Activated B cell treated with CpG ODN at 0.5 μM for 24 hours (primary cell): ENCODE measurements at regions of chr7 and their contacts with region 1.

Region 1: DNA sequence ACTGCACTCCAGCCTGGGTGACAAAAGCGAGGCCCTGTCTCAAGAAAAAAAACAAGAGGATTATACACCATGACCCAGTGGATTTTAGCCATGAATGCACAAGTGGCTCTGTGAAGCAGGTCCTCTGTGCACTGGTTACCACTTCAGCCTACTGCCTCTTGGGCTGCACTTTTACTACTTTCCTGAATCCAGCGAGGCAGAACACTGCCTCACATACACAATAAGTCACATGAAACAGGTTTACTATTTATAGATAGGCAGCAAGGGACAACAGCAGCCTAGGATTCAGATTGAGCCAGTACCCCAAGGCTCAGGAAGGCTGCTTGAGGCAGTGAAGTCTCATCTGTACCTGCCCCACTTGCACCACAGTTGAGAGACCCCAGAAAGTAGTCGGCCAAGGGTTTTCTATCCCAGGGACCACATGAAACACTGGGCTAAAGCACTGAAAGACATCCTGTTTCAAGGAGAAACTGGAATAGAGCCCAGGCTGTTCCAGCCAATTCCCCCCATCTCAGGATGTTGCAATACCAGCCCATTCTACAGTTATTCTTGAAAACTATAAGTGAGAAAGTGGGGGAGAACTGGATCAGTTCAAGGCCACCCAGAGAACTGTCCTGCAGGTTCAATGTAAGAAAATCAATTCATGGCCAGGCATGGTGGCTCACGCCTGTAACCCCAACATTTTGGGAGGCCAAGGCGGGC is 10.3 kb upstream of the OGDH start:
- DNase-seq: no peak
- ATAC-seq: no peak
- H3K4me3 Mint-ChIP-seq: no peak overlapping the region
- H3K27ac Mint-ChIP-seq: no peak overlapping the region
- H3K4me1 Mint-ChIP-seq: no peaks in the 10 kb centered on the region
- H3K27me3 Mint-ChIP-seq: peaks cover 5% of the 10 kb centered on the region
- CTCF ChIP-seq: no peak

Region 2: DNA sequence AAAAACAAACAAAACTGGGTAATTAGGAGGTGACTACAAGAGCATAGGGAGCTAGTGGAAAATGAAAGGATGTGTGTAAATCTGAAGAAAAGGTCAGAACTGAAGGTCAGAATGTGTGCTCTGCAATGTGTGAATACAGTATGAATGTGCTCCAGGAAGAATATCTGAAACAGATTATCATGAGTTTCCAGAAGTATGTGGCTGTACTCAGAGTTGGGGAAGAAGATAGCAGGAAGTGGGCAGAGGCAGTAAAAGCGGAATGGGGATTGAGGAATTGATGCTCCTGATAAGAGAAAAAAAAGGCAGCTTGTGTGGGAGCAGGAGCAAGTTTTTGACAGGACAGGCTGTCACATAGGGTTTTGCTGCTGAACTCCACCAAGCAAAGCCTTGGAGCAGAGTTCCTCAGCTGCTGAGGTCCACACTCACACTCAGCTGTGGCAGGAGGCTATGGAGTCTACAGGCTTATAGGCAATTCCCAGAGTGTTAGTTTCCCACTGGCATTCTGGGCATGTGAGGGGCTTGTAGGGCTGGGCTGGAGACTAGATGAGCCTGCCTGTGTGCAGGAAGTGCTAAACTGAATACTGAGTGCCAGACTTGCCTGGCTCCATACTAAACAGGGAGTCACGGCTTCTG is 228.9 kb after region 1 on chr7:
- CTCF ChIA-PET with region 1: no interaction called
- POLR2A ChIA-PET with region 1: interaction called, 10 read pairs
- intact Hi-C with region 1: no loop called
- DNase-seq: no peak
- ATAC-seq: no peak
- H3K4me3 Mint-ChIP-seq: no peak overlapping the region
- H3K27ac Mint-ChIP-seq: no peak overlapping the region
- H3K4me1 Mint-ChIP-seq: no peaks in the 10 kb centered on the region
- H3K27me3 Mint-ChIP-seq: no peaks in the 10 kb centered on the region
- CTCF ChIP-seq: no peak